Activated CD4-positive, alpha-beta memory T cell treated with anti-CD3 and anti-CD28 coated beads for 36 hours (primary cell): ENCODE measurements at regions of chr12 and their contacts with region 1.

Region 1: GRCh38 chr12:130871286-130872178 is at the start of gene RAN:
- DNase-seq: peak; percentile 95
- H3K4me3 Mint-ChIP-seq: peak within 1 kb of the TSS; percentile 99
- H3K27ac Mint-ChIP-seq: peak within 1 kb of the TSS; percentile 99
- H3K4me1 Mint-ChIP-seq: peaks cover 49% of the 10 kb centered on the region
- H3K27me3 Mint-ChIP-seq: no peaks in the 10 kb centered on the region
- total RNA-seq, gene RAN: 2,100 to 2,144 TPM

Region 2: DNA sequence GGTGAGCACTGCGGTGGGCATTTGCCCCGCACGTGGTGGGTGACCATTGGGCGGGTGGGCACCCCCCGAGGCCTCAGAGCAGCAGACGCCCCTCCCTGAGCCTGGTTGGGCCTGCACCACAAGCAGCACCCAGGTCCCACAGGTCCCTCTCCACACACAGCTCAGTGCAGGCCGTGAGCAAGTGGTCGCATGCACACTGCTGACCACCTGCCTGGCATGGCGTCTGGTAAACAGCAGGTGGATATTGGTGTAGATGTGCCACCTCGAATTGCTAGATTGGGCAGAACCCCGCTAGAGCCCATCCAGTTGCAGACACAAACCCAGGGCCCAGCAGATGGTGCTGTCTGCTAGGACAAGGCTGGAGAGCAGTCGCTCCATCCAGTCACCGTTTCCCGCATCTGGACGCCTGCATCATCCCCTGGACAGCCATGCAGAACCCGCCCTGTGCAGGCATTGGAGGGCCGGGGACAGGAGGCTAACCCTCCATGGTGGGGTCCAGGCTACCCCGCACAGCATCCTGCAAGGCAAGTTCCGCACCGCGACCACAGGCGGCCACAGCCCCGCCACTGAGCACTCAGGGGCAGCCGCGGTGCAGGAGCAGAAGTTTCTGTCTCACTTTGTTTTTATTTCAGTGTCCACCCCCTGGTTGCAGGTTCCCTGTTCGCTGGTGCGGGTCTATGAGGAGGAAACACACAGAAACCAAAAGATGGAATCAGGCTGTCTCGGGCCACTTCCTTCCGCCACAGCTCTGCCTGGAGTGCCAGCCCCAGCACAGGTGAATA is 109.8 kb before region 1 on chr12:
- CTCF ChIA-PET with region 1: interaction called, 3 read pairs
- POLR2A ChIA-PET with region 1: no interaction called
- intact Hi-C with region 1: loop called (anchors 5 kb)
- DNase-seq: peak; percentile 79
- H3K4me3 Mint-ChIP-seq: peak overlapping the region; percentile 66
- H3K27ac Mint-ChIP-seq: no peak overlapping the region
- H3K4me1 Mint-ChIP-seq: peaks cover 3% of the 10 kb centered on the region
- H3K27me3 Mint-ChIP-seq: peaks cover 4% of the 10 kb centered on the region

Region 3: DNA sequence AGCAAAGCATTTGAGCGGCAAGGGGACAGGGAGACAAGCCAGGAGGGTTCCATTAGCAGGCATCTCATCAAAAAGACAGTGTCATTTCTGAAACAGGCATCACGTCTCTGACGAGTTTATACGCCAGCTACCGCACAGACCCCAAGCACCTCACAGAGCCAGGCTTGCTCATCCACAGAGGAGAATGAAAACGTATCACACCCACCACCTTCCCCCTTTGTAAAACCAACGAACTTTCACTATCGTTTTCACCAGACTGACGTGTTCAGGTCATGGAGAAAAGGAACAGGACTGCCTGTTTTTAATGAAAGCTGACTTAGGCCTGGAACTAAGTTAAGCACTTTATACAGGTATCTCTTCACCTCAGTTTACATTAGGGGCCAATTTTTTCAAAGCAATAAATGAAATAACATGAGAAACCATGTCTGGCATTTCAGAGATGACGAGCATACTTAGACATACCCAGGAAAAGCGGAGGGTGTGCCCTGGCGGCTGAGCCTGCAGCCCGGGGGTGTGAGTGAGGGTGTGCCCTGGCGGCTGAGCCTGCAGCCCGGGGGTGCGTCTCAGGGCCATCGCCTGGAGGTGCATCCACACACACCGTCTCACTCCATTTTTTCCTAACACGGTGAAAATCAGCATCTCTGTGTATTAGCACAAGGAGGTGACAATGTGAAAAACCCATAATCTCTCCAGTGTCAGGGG is 74.4 kb before region 1 on chr12:
- CTCF ChIA-PET with region 1: no interaction called
- POLR2A ChIA-PET with region 1: no interaction called
- intact Hi-C with region 1: no loop called
- DNase-seq: peak; percentile 84
- H3K4me3 Mint-ChIP-seq: peak overlapping the region; percentile 48
- H3K27ac Mint-ChIP-seq: peak overlapping the region; percentile 87
- H3K4me1 Mint-ChIP-seq: peaks cover 29% of the 10 kb centered on the region
- H3K27me3 Mint-ChIP-seq: no peaks in the 10 kb centered on the region

Region 4: DNA sequence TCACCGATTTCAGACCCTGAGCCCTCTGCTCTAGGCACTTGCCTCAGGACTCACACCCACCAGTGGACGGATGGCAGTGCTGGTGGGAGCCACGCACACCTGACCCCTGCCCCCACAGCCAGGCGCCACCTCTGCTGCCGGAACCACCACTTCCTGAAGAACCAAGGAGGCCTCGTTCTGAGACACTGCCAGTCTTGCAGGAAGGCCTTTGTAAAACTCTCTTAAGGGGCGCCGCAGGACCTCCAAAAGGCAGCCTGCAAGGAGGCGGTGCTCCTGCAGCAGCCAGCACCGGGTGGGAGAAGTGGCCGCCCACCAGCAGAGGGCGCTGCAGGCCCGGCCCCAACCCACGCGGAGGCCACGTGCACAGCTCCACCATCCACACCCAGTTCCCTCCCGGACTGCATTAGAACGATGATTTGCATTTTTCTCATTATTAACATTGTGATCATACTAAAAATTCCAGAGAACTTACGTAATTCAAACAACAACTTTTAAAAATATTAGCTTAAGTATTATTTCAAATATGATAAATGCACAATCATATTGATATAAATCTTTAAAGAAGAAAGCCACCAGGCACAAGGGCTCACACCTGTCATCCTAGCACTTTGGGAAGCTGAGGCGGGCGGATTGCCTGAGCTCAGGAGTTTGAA is 45.3 kb before region 1 on chr12:
- CTCF ChIA-PET with region 1: interaction called, 12 read pairs
- POLR2A ChIA-PET with region 1: interaction called, 4 read pairs
- intact Hi-C with region 1: no loop called
- DNase-seq: peak; percentile 82
- H3K4me3 Mint-ChIP-seq: no peak overlapping the region
- H3K27ac Mint-ChIP-seq: no peak overlapping the region
- H3K4me1 Mint-ChIP-seq: peaks cover 13% of the 10 kb centered on the region
- H3K27me3 Mint-ChIP-seq: no peaks in the 10 kb centered on the region

Region 5: GRCh38 chr12:130838951-130839769 is 32.4 kb before region 1 on chr12 and contains the start of gene STX2:
- CTCF ChIA-PET with region 1: interaction called, 10 read pairs
- POLR2A ChIA-PET with region 1: interaction called, 6 read pairs
- intact Hi-C with region 1: loop called (anchors 1 kb)
- DNase-seq: peak; percentile 92
- H3K4me3 Mint-ChIP-seq: peak within 1 kb of the TSS; percentile 79
- H3K27ac Mint-ChIP-seq: peak within 1 kb of the TSS; percentile 46
- H3K4me1 Mint-ChIP-seq: peaks cover 35% of the 10 kb centered on the region
- H3K27me3 Mint-ChIP-seq: no peaks in the 10 kb centered on the region
- total RNA-seq, gene STX2: 18.1 to 22.8 TPM

Region 6: DNA sequence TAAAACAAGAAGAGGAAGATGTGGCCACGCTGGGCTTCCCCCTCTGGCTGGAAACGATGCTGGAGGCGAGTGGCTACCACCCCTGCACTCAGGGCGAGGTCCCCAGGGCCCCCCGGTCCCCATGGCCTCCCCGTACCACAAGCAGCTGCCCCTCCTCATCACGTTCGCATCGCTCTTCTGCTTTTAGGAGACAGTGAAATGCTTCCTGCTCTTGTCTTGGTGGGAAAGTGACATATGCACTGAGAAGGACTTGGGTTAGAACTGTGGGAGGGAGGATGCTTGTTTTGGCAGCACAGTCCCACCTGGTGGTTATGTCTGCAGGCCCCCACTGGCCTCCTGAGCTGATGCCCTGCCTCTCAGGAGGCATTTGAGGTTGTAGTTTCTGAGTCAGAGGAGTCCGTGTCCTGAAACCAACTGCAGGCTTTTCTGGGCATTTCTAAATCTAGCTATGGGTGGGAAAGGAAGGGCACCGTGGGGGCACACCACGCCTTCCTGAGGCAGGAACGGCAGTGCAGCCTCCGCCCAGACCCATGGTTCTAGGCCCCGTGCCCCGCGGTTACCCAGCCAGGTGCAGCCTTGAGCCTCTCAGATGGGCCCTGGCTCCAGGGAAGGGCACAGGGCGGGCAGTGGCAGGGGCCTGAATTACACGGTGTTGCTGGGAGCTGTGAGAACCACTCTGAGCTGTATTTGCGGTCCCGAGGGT is 221.5 kb after region 1 on chr12:
- CTCF ChIA-PET with region 1: no interaction called
- POLR2A ChIA-PET with region 1: no interaction called
- intact Hi-C with region 1: loop called (anchors 1 kb)
- DNase-seq: peak; percentile 39
- H3K4me3 Mint-ChIP-seq: no peak overlapping the region
- H3K27ac Mint-ChIP-seq: no peak overlapping the region
- H3K4me1 Mint-ChIP-seq: peaks cover 18% of the 10 kb centered on the region
- H3K27me3 Mint-ChIP-seq: peaks cover 5% of the 10 kb centered on the region

Region 7: DNA sequence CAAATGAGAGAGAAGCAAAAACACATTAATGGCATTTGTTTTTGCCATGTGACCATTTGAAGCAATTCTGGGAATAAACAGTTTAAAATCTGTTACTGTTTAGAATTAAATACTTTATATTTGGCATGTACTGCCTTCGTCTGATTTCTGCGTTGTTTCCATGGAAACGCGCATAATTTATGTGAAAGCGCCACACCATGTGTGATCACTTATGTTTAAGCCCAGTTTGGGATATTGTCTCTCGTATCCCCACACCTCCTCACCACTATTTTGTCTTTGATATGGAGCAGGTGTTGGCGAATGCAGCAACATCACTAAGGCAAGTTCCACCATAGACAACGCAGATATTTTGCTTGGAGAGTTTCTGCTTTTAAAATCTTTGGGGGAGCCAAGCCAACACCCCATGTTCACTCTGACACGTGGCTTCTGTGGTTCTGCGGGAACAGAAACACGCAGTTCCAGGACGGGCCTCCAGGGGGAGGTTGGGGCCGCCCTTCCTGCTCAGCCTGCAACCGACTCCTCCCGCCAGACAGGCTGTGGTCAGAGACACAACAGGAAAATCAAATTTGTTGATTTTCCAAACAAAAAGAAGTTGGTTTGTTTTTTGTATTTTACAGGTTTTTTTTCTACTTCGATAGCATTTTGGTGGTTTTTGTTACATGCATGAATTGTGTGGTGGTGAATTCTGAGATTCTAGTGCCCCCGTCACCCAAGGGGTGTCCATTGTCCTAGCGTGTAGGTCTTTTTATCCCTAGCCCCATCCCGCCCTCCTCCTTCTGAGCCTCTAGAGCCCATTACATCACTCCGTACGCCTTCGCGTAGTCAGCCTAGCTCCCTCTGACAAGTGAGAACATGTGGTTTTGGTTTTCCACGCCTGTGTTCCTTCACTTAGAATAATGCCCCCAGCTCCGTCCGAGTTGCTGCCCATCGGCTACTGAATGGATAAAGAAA is 737.5 kb after region 1 on chr12:
- CTCF ChIA-PET with region 1: no interaction called
- POLR2A ChIA-PET with region 1: no interaction called
- intact Hi-C with region 1: loop called (anchors 5 kb)
- DNase-seq: peak; percentile 78
- H3K4me3 Mint-ChIP-seq: no peak overlapping the region
- H3K27ac Mint-ChIP-seq: peak overlapping the region; percentile 10
- H3K4me1 Mint-ChIP-seq: peaks cover 56% of the 10 kb centered on the region
- H3K27me3 Mint-ChIP-seq: no peaks in the 10 kb centered on the region

Region 8: GRCh38 chr12:131894313-131894860 is 1022.9 kb after region 1 on chr12 and contains the start of gene ULK1:
- CTCF ChIA-PET with region 1: no interaction called
- POLR2A ChIA-PET with region 1: no interaction called
- intact Hi-C with region 1: loop called (anchors 10 kb)
- DNase-seq: peak; percentile 94
- H3K4me3 Mint-ChIP-seq: peak within 1 kb of the TSS; percentile 79
- H3K27ac Mint-ChIP-seq: peak within 1 kb of the TSS; percentile 54
- H3K4me1 Mint-ChIP-seq: peaks cover 12% of the 10 kb centered on the region
- H3K27me3 Mint-ChIP-seq: no peaks in the 10 kb centered on the region
- total RNA-seq, gene ULK1: 13.8 to 17.8 TPM